HepG2 (cell line): ENCODE measurements at regions of chr20 and their contacts with region 1.

Region 1: DNA sequence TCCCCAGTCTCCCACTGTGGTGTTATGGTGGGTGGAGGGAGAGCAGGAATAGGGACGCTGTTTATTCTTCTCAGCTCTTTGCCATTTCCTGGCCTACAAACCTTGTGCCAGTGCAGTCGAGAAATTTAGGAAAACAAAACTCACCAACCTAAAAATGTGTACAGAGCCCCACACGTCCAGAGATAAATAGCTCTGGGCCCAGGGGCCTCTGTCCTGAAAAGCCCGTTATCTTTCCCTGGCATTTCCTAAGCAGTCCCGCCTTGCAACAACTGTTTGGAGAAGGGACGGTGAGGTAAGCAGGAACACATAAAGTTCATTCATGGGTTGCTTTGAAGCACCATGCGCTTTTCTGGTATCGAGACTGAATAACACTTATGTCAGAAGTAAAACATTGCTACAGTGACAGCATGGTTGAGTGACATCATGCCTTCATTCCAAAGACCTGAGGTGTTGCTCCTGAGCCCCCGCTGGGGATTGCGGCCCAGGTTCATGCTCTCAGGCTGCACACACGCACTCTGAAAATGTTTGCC is 80.1 kb upstream of the NXT1 start:
- DNase-seq: peak; percentile 98
- ATAC-seq: peak; percentile 85
- H3K4me3 ChIP-seq: peak overlapping the region in 1 of 3 experiments; percentile 25; a peak in 1 of 6 replicates
- H3K27ac ChIP-seq: peak overlapping the region; percentile 19
- H3K4me1 ChIP-seq: peaks cover 23% of the 10 kb centered on the region
- H3K27me3 ChIP-seq: 0 out of 5 replicates have a peak, but pooled peaks cover 0 to 4% of the 10 kb centered on the region in 2 experiments
- CTCF ChIP-seq: no peak
- EP300 ChIP-seq: peak in 1 of 2 experiments; percentile 72; a peak in 2 of 4 replicates
- POLR2A ChIP-seq: no peak
- RAD21 ChIP-seq: no peak

Region 2: GRCh38 chr20:23231596-23232581 is 38.6 kb before region 1 on chr20:
- CTCF ChIA-PET with region 1: no interaction called
- POLR2A ChIA-PET with region 1: interaction called, 3 read pairs
- in situ Hi-C with region 1: no loop called
- intact Hi-C with region 1: loop called (anchors 1 kb)
- DNase-seq: peak; percentile 45
- ATAC-seq: peak; percentile 43
- H3K4me3 ChIP-seq: no peak overlapping the region
- H3K27ac ChIP-seq: peak overlapping the region; percentile 27
- H3K4me1 ChIP-seq: peaks cover 33% of the 10 kb centered on the region
- H3K27me3 ChIP-seq: no peaks in the 10 kb centered on the region; a peak in 1 of 5 replicates
- CTCF ChIP-seq: no peak
- EP300 ChIP-seq: no peak
- POLR2A ChIP-seq: no peak
- RAD21 ChIP-seq: no peak

Region 3: GRCh38 chr20:23245553-23246181 is 24.8 kb before region 1 on chr20:
- CTCF ChIA-PET with region 1: no interaction called
- POLR2A ChIA-PET with region 1: no interaction called
- in situ Hi-C with region 1: no loop called
- intact Hi-C with region 1: loop called (anchors 1 kb)
- DNase-seq: peak; percentile 52
- ATAC-seq: peak; percentile 95
- H3K4me3 ChIP-seq: no peak overlapping the region
- H3K27ac ChIP-seq: no peak overlapping the region
- H3K4me1 ChIP-seq: no peaks in the 10 kb centered on the region
- H3K27me3 ChIP-seq: no peaks in the 10 kb centered on the region
- CTCF ChIP-seq: peak; percentile 87
- EP300 ChIP-seq: no peak
- POLR2A ChIP-seq: no peak
- RAD21 ChIP-seq: no peak

Region 4: DNA sequence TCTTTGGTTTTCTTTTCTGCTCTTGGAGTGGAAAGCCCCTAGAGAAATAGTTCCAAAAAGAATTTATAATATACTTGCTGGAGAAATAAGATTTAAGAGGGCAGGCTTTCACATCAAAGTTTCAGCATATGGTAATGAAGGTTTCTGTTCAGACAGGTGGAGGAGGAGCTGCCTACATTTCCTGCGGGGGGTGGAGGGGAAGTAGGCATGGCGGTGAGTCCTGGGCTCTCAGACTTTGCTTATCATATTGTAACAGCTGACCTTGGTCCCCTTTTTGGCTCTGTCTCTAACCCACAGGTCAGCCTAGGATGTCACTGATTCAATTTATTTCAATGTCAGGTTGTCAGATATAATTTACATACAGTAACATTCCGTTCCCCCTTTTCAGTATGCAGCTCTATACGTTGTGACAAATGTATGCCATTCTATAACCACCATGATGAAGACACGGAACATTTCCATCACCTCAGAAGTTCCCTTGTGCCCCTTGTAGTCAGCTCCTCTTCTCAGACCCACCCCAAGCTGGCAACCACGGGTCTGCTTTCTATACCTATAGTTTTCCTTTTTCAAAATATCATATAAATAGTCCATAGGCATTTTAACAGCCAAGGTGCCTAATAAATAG is 795.7 kb after region 1 on chr20:
- CTCF ChIA-PET with region 1: no interaction called
- POLR2A ChIA-PET with region 1: no interaction called
- in situ Hi-C with region 1: no loop called
- intact Hi-C with region 1: no loop called
- DNase-seq: no peak
- ATAC-seq: no peak
- H3K4me3 ChIP-seq: no peak overlapping the region
- H3K27ac ChIP-seq: no peak overlapping the region
- H3K4me1 ChIP-seq: no peaks in the 10 kb centered on the region
- H3K27me3 ChIP-seq: no peaks in the 10 kb centered on the region
- CTCF ChIP-seq: no peak
- EP300 ChIP-seq: no peak
- POLR2A ChIP-seq: no peak
- RAD21 ChIP-seq: no peak